Stomach (tissue), 19 donors: ENCODE measurements at regions of chr5 and their contacts with region 1.

Region 1: GRCh38 chr5:78359831-78360673 is at the start of gene SCAMP1:
- DNase-seq: peak; percentile 94 to 98
- H3K4me3 ChIP-seq: peak within 1 kb of the TSS; percentile 87 to 97 (median 94)
- H3K27ac ChIP-seq: peak within 1 kb of the TSS; percentile 93 to 98 (median 98)
- H3K4me1 ChIP-seq: peaks cover 18 to 44% (median 36%) of the 10 kb centered on the region in 4 donors
- H3K27me3 ChIP-seq: no peaks in the 10 kb centered on the region
- CTCF ChIP-seq: peak in 3 of 7 experiments; percentile 13 to 49 (median 29)
- EP300 ChIP-seq: no peak
- POLR2A ChIP-seq: no peak
- total RNA-seq, gene SCAMP1: 14.6 to 77.3 (median 25.8) TPM

Region 2: GRCh38 chr5:78300464-78301045 is 59.5 kb before region 1 on chr5:
- intact Hi-C with region 1: loop called (anchors 5 kb)
- DNase-seq: peak in 1 of 2 donors; percentile 30
- H3K4me3 ChIP-seq: no peak overlapping the region
- H3K27ac ChIP-seq: no peak overlapping the region
- H3K4me1 ChIP-seq: peaks cover 3 to 5% (median 3%) of the 10 kb centered on the region in 4 donors
- H3K27me3 ChIP-seq: no peaks in the 10 kb centered on the region
- CTCF ChIP-seq: peak in 2 of 7 experiments; percentile 18 to 27
- EP300 ChIP-seq: no peak
- POLR2A ChIP-seq: no peak